ENCODE measurements at regions of chr15 and their contacts with region 1.

Region 1: GRCh38 chr15:55588070-55588814 is at the start of gene PYGO1:
- DNase-seq: peak; percentile 24
- H3K4me3 ChIP-seq: peak within 1 kb of the TSS; percentile 77
- H3K27ac ChIP-seq: peak within 1 kb of the TSS; percentile 83
- H3K27me3 ChIP-seq: no peaks in the 10 kb centered on the region
- CTCF ChIP-seq: no peak; the same call in 1 of the 2 replicates
- polyA plus RNA-seq, gene PYGO1: 7.7 and 10.7 TPM in 2 replicates

Region 2: GRCh38 chr15:55202206-55202605 is 386.0 kb before region 1 on chr15:
- CTCF ChIA-PET with region 1: no interaction called
- POLR2A ChIA-PET with region 1: no interaction called
- DNase-seq: no peak
- H3K4me3 ChIP-seq: no peak overlapping the region
- H3K27ac ChIP-seq: no peak overlapping the region
- H3K27me3 ChIP-seq: no peaks in the 10 kb centered on the region
- CTCF ChIP-seq: no peak

Region 3: DNA sequence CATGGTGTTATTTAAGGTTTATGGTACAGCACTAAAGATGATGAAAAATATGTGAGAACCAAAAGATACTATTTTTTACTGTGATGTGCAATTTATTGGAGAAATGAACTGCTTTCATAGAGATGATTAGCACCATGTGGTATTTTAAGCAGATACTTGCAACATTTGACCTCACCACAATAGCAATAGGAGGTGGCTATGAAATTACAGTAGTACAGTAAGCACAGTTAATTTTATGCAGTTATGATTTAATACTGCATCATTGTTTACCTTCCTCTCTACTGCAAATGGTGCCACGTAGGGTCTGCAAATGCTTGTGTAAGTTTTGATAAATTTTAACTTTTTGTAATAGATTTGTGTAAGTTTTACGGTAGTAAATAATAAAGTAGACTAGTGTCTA is 14.1 kb before region 1 on chr15:
- CTCF ChIA-PET with region 1: no interaction called
- POLR2A ChIA-PET with region 1: no interaction called
- DNase-seq: no peak
- H3K4me3 ChIP-seq: no peak overlapping the region
- H3K27ac ChIP-seq: no peak overlapping the region
- H3K27me3 ChIP-seq: no peaks in the 10 kb centered on the region
- CTCF ChIP-seq: no peak

Region 4: DNA sequence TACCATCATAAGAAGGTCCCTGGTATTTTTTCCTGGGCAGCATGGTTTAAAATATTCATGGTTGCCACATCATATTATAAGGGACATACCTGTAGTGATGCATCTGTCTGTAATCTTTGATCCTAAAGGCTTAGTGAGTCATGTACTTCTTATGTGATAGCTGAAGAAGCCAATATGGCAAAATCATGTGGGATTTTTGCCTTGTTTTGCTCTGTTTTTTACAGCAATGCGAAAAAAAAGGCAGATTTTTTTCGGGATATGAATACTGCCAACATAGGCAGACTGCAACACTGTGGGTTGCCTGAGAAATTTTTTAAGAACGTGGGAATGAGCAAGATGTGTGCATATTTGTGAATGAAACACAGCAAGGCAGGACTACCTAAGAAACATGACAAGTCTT is 11.2 kb after region 1 on chr15:
- CTCF ChIA-PET with region 1: interaction called, 10 read pairs
- POLR2A ChIA-PET with region 1: no interaction called
- DNase-seq: no peak
- H3K4me3 ChIP-seq: no peak overlapping the region
- H3K27ac ChIP-seq: no peak overlapping the region
- H3K27me3 ChIP-seq: peaks cover 3% of the 10 kb centered on the region
- CTCF ChIP-seq: no peak